Sigmoid colon (tissue), 7 donors: ENCODE measurements at regions of chr3 and their contacts with region 1.

Region 1: DNA sequence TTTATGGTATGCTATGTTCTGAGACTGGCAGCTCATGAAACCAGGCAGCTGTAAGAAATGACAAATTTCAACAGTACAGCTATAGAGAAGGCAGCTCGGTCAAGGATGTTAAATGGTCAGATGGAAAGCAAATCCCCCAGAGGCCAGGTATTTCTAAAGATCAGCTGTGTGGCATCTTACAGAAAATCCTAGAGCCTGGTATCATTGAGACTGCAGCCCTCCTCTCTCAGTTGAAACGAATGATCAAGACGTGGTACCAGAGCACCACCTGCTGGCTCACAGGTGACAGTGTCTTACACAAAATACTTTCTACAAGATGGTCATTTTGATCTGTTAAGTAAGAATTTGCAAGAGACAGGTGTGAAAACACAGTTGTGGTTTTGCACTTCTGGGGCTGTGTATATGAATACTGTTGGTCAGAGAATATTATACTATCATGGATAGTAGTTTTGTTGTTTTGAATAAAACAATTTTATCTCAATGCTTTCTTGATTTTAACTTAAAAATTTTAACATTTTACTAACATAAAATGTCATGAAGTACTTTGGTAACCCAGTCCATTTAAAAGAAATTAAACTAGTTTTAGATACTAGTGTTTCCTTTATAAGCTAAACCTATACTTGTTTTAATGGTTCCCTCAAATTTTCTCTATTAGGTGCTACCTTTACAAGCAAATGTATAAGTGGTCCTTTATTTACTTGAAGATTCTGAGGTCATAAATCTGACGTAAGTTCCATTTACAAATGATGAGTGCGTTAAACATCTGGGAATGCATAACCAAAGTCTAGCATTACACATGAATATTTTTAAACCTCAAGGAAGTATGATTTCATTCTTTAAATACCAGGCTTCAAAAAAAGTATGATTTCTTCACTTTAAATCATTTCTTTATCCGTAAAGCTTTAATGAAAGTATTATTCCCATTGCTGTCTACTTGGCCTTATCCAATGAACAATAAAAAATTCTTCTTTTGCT is 121.8 kb downstream of the PDZRN3 start:
- DNase-seq: peak; percentile 84
- H3K4me3 ChIP-seq: peak overlapping the region in 1 of 4 donors; percentile 15
- H3K27ac ChIP-seq: peak overlapping the region; percentile 49 to 90 (median 74)
- H3K4me1 ChIP-seq: peaks cover 0 to 91% (median 60%) of the 10 kb centered on the region in 4 donors
- H3K27me3 ChIP-seq: no peaks in the 10 kb centered on the region
- CTCF ChIP-seq: peak; percentile 74 to 85 (median 80)
- EP300 ChIP-seq: no peak
- POLR2A ChIP-seq: no peak

Region 2: GRCh38 chr3:73100741-73101559 is 401.9 kb before region 1 on chr3:
- intact Hi-C with region 1: loop called (anchors 1 kb)
- DNase-seq: peak; percentile 91
- H3K4me3 ChIP-seq: no peak overlapping the region
- H3K27ac ChIP-seq: no peak overlapping the region
- H3K4me1 ChIP-seq: peaks cover 0 to 6% (median 0%) of the 10 kb centered on the region in 4 donors
- H3K27me3 ChIP-seq: no peaks in the 10 kb centered on the region
- CTCF ChIP-seq: peak; percentile 90 to 95 (median 92)
- EP300 ChIP-seq: no peak
- POLR2A ChIP-seq: no peak

Region 3: DNA sequence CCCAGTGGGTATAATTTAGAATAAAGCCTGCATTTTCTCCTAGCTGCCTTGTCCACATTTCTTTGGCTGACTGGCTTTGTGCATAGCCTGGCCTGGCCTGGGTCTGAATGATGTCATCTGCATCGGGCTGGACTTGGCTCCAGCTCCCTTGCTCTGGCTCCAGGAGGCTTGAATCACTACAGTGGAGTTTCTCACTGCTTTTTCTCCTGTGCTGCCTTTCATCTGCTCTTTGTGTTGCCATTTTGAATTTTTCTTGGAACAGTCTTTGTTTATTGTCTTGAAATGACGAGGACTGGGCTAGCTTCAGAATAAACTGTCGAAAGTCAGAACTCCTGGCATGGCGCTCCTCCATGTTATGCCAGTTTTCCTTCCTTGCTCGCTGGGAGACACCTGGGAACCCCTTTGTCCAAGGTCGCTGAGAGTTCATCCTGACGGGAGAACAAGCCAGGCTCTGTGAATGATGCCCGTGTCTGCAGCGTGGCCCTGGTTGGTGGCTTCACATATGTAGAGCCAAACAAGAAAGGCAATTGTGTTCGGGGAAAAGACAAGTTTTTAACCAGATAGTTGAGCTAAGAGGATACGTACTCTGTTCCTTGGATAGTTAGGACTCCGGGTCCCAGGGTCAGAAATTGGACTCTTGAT is 137.0 kb before region 1 on chr3:
- intact Hi-C with region 1: loop called (anchors 10 kb)
- DNase-seq: peak; percentile 94
- H3K4me3 ChIP-seq: peak overlapping the region in 1 of 4 donors; percentile 9
- H3K27ac ChIP-seq: peak overlapping the region; percentile 1 to 81 (median 68)
- H3K4me1 ChIP-seq: peaks cover 0 to 35% (median 21%) of the 10 kb centered on the region in 4 donors
- H3K27me3 ChIP-seq: no peaks in the 10 kb centered on the region
- CTCF ChIP-seq: no peak
- EP300 ChIP-seq: peak; percentile 35 to 73 (median 62)
- POLR2A ChIP-seq: no peak

Region 4: GRCh38 chr3:73448761-73449301 is 54.1 kb before region 1 on chr3:
- intact Hi-C with region 1: no loop called
- DNase-seq: no peak
- H3K4me3 ChIP-seq: no peak overlapping the region
- H3K27ac ChIP-seq: peak overlapping the region in 1 of 4 donors; percentile 38
- H3K4me1 ChIP-seq: peaks cover 0 to 86% (median 71%) of the 10 kb centered on the region in 4 donors
- H3K27me3 ChIP-seq: no peaks in the 10 kb centered on the region
- CTCF ChIP-seq: no peak
- EP300 ChIP-seq: no peak
- POLR2A ChIP-seq: no peak

Region 5: DNA sequence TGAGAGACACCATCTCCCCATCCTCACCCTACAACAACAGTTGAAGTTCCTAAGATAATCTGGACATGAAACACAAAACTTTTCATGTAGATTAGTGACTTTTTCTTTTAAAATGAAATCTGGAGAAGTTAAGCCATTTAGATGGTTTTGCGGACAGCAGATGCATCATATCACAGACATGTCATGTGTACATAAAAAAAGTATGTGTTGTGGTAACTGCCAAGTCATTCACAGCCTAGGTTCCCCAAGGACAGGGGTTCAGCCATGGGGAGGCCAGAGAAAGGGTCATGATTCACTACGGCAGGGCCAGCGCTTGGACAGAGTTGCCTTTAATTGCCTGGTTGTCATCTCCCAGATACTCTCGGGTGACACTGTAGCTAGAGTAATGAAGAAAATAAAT is 41.3 kb before region 1 on chr3:
- intact Hi-C with region 1: loop called (anchors 5 kb)
- DNase-seq: no peak
- H3K4me3 ChIP-seq: no peak overlapping the region
- H3K27ac ChIP-seq: peak overlapping the region in 1 of 4 donors; percentile 9
- H3K4me1 ChIP-seq: peaks cover 0 to 46% (median 23%) of the 10 kb centered on the region in 4 donors
- H3K27me3 ChIP-seq: no peaks in the 10 kb centered on the region
- CTCF ChIP-seq: no peak
- EP300 ChIP-seq: no peak
- POLR2A ChIP-seq: no peak

Region 6: GRCh38 chr3:73614411-73614810 is 111.5 kb after region 1 on chr3:
- intact Hi-C with region 1: no loop called
- DNase-seq: peak; percentile 83
- H3K4me3 ChIP-seq: no peak overlapping the region
- H3K27ac ChIP-seq: peak overlapping the region; percentile 71 to 96 (median 94)
- H3K4me1 ChIP-seq: peaks cover 0 to 99% (median 96%) of the 10 kb centered on the region in 4 donors
- H3K27me3 ChIP-seq: no peaks in the 10 kb centered on the region
- CTCF ChIP-seq: no peak
- EP300 ChIP-seq: no peak
- POLR2A ChIP-seq: no peak